ENCODE measurements at regions of chr16 and their contacts with region 1.

Region 1: GRCh38 chr16:69386596-69386995 is 789 bp upstream of the TERF2 start:
- DNase-seq: no peak
- ATAC-seq: no peak
- H3K4me3 ChIP-seq: no peak overlapping the region
- H3K4me3 Mint-ChIP-seq: peak overlapping the region in 8 of 10 donors; percentile 86 to 96 (median 92)
- H3K27ac ChIP-seq: peak overlapping the region; percentile 95
- H3K27ac Mint-ChIP-seq: peak overlapping the region in 6 of 9 donors; percentile 90 to 99 (median 95)
- H3K4me1 ChIP-seq: peaks cover 10 to 27% of the 10 kb centered on the region in 2 donors
- H3K4me1 Mint-ChIP-seq: peaks cover 22 to 37% (median 35%) of the 10 kb centered on the region in 7 donors
- H3K27me3 ChIP-seq: no peaks in the 10 kb centered on the region
- H3K27me3 Mint-ChIP-seq: no peaks in the 10 kb centered on the region

Region 2: GRCh38 chr16:67872786-67873537 is 1513.6 kb before region 1 on chr16 and contains the start of gene EDC4:
- CTCF ChIA-PET with region 1: no interaction called
- POLR2A ChIA-PET with region 1: no interaction called
- intact Hi-C with region 1: no loop called
- DNase-seq: peak; percentile 75 to 96 (median 83)
- ATAC-seq: peak; percentile 96
- H3K4me3 ChIP-seq: peak within 1 kb of the TSS; percentile 88
- H3K4me3 Mint-ChIP-seq: peak within 1 kb of the TSS; percentile 88 to 96 (median 94)
- H3K27ac ChIP-seq: peak within 1 kb of the TSS; percentile 91
- H3K27ac Mint-ChIP-seq: peak within 1 kb of the TSS; percentile 90 to 97 (median 92)
- H3K4me1 ChIP-seq: peaks cover 19 to 30% of the 10 kb centered on the region in 2 donors
- H3K4me1 Mint-ChIP-seq: peaks cover 25 to 41% (median 36%) of the 10 kb centered on the region in 7 donors
- H3K27me3 ChIP-seq: no peaks in the 10 kb centered on the region
- H3K27me3 Mint-ChIP-seq: no peaks in the 10 kb centered on the region
- total RNA-seq, gene EDC4: 103 to 166 (median 122) TPM

Region 3: DNA sequence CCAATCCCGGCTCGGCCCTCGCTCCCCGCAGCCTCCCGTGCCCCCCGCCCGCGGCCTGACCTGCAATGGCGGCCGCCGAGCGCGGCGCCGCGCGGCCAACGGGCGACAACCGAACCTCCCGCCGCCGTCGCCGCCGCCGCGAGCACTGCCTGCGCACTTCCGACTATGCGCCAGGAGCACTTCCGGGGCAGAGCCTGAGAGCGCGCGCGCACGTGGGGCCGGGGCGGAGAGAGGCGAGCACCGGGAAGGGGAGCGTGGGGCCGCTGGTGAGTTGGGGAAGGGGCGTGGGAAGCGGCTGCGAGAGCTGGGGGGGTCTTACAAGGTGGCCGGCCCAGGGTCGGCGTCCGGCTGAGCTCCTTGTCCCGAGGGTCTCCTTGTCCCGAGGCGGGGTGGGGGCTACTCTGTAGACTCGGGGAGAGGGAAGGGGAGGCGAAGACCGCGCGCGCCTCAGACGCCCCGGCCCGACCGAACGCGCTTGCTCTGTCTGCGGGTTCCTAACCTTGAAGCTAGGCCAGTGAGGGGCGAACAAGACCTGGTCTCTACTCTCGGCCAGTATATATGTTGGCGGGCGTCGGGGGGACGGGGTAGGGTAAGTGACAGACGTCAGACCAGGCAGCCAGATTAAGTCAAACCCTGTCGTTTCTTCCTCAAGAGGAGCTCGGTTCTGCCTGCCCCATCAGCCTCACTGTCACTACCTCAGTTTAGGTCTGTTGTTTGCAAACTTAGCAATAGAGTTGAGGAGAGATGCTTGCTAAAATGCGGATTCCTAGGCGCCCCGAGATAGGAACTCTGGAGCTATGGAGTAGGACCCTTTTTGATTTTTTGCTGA is 254.0 kb before region 1 on chr16 and contains the starts of genes CHTF8 and UTP4:
- CTCF ChIA-PET with region 1: no interaction called
- POLR2A ChIA-PET with region 1: interaction called, 3 read pairs
- intact Hi-C with region 1: loop called (anchors 2 to 5 kb)
- DNase-seq: peak; percentile 81 to 91 (median 87)
- ATAC-seq: peak; percentile 95
- H3K4me3 ChIP-seq: peak within 1 kb of the TSS; percentile 80
- H3K4me3 Mint-ChIP-seq: peak within 1 kb of the TSS; percentile 91 to 97 (median 94)
- H3K27ac ChIP-seq: peak within 1 kb of the TSS; percentile 88
- H3K27ac Mint-ChIP-seq: peak within 1 kb of the TSS; percentile 85 to 97 (median 95)
- H3K4me1 ChIP-seq: peaks cover 12 to 23% of the 10 kb centered on the region in 2 donors
- H3K4me1 Mint-ChIP-seq: peaks cover 16 to 71% (median 61%) of the 10 kb centered on the region in 7 donors
- H3K27me3 ChIP-seq: no peaks in the 10 kb centered on the region
- H3K27me3 Mint-ChIP-seq: no peaks in the 10 kb centered on the region
- total RNA-seq, gene CHTF8: 53.3 to 142 (median 133) TPM
- total RNA-seq, gene UTP4: 31.9 to 56.5 (median 35.1) TPM

Region 4: GRCh38 chr16:69273009-69273408 is 113.6 kb before region 1 on chr16:
- CTCF ChIA-PET with region 1: no interaction called
- POLR2A ChIA-PET with region 1: no interaction called
- intact Hi-C with region 1: no loop called
- DNase-seq: no peak
- ATAC-seq: no peak
- H3K4me3 ChIP-seq: no peak overlapping the region
- H3K4me3 Mint-ChIP-seq: no peak overlapping the region
- H3K27ac ChIP-seq: no peak overlapping the region
- H3K27ac Mint-ChIP-seq: no peak overlapping the region
- H3K4me1 ChIP-seq: no peaks in the 10 kb centered on the region
- H3K4me1 Mint-ChIP-seq: peaks cover 0 to 4% (median 0%) of the 10 kb centered on the region in 7 donors
- H3K27me3 ChIP-seq: no peaks in the 10 kb centered on the region
- H3K27me3 Mint-ChIP-seq: no peaks in the 10 kb centered on the region

Region 5: DNA sequence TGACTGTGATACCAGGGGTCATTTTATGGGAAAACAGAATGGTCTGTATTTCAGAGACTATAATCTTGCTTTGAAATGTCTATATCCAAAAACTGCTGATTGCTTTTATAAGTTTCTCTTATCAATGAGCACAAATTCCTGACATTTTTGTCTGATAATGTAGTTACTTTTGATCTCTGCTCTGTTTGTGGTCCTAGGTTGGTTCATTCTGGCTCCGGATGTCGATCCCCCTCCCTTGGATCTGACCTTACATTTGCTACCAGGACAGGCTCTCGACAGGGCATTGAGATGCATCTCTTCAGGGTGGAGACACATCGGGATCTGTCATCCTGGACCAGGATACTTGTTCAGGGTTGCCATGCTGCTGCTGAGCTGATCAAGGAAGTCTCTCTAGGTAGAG is 102.7 kb before region 1 on chr16:
- CTCF ChIA-PET with region 1: no interaction called
- POLR2A ChIA-PET with region 1: no interaction called
- intact Hi-C with region 1: no loop called
- DNase-seq: no peak
- ATAC-seq: no peak
- H3K4me3 ChIP-seq: no peak overlapping the region
- H3K4me3 Mint-ChIP-seq: no peak overlapping the region
- H3K27ac ChIP-seq: no peak overlapping the region
- H3K27ac Mint-ChIP-seq: no peak overlapping the region
- H3K4me1 ChIP-seq: no peaks in the 10 kb centered on the region
- H3K4me1 Mint-ChIP-seq: peaks cover 0 to 2% (median 0%) of the 10 kb centered on the region in 7 donors
- H3K27me3 ChIP-seq: no peaks in the 10 kb centered on the region
- H3K27me3 Mint-ChIP-seq: no peaks in the 10 kb centered on the region

Region 6: GRCh38 chr16:69330286-69331109 is 56.1 kb before region 1 on chr16 and contains the start of gene PDF:
- CTCF ChIA-PET with region 1: no interaction called
- POLR2A ChIA-PET with region 1: interaction called, 4 read pairs
- intact Hi-C with region 1: loop called in 1 of 2 experiments (anchors 2 kb)
- DNase-seq: peak; percentile 61 to 91 (median 72)
- ATAC-seq: peak; percentile 97
- H3K4me3 ChIP-seq: peak within 1 kb of the TSS; percentile 64
- H3K4me3 Mint-ChIP-seq: peak within 1 kb of the TSS; percentile 69 to 87 (median 76)
- H3K27ac ChIP-seq: peak within 1 kb of the TSS; percentile 90
- H3K27ac Mint-ChIP-seq: peak within 1 kb of the TSS; percentile 36 to 80 (median 62)
- H3K4me1 ChIP-seq: peaks cover 13 to 37% of the 10 kb centered on the region in 2 donors
- H3K4me1 Mint-ChIP-seq: peaks cover 16 to 72% (median 54%) of the 10 kb centered on the region in 7 donors
- H3K27me3 ChIP-seq: no peaks in the 10 kb centered on the region
- H3K27me3 Mint-ChIP-seq: no peaks in the 10 kb centered on the region
- total RNA-seq, gene PDF: 4.6 to 11.8 (median 9.5) TPM

Region 7: GRCh38 chr16:69424053-69424934 is 37.7 kb after region 1 on chr16 and contains the start of gene CYB5B:
- CTCF ChIA-PET with region 1: no interaction called
- POLR2A ChIA-PET with region 1: interaction called, 3 read pairs
- intact Hi-C with region 1: loop called (anchors 1 kb)
- DNase-seq: peak; percentile 72 to 98 (median 96)
- ATAC-seq: peak; percentile 98
- H3K4me3 ChIP-seq: peak within 1 kb of the TSS; percentile 84
- H3K4me3 Mint-ChIP-seq: peak within 1 kb of the TSS; percentile 92 to 99 (median 97)
- H3K27ac ChIP-seq: peak within 1 kb of the TSS; percentile 83
- H3K27ac Mint-ChIP-seq: peak within 1 kb of the TSS; percentile 89 to 98 (median 93)
- H3K4me1 ChIP-seq: peaks cover 0 to 13% of the 10 kb centered on the region in 2 donors
- H3K4me1 Mint-ChIP-seq: peaks cover 12 to 49% (median 37%) of the 10 kb centered on the region in 7 donors
- H3K27me3 ChIP-seq: no peaks in the 10 kb centered on the region
- H3K27me3 Mint-ChIP-seq: no peaks in the 10 kb centered on the region
- total RNA-seq, gene CYB5B: 29.6 to 148 (median 48.2) TPM

Region 8: DNA sequence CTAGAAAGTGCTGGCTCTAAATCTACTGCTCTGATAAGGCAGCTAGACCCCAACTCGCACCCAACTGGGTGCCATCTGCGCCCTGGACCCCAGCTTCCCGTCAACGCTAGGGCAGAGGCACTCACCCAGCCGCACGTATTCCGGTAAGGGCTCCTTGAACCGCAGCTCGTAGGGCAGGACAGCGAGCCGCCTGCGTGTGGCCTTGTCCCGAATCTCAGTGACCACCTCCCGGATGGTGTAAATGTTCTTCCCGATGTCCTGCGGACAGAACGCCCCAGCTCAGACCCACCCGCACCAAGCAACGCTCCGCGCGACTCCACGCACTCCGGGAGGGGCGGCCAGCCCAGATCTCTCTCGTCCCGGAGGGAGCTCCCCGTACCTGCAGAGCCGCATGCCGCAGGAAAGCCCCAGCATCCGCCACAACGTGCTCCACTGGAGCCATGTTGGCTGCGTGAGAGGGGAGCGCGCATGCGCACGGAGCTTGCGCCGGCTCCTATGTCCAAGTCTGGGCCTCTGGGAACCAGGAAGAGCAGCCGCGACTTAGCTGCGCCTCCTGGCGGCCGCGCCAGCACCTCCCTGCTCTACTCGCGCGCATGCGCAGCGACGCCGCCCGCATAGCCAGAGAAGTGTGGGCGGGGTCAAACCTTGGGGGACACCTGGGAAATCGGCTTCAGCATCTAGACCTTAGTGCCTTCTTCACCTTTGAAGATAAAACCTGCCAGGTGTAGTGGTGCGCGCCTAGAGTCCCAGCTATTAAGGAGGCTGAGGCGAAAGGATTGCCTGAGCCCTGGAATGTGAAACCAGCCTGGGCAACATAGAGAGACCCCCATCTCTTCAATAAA is 368.1 kb after region 1 on chr16 and contains the start of gene NOB1:
- CTCF ChIA-PET with region 1: no interaction called
- POLR2A ChIA-PET with region 1: no interaction called
- intact Hi-C with region 1: loop called (anchors 2 kb)
- DNase-seq: peak; percentile 96 to 98 (median 97)
- ATAC-seq: peak; percentile 97
- H3K4me3 ChIP-seq: peak within 1 kb of the TSS; percentile 91
- H3K4me3 Mint-ChIP-seq: peak within 1 kb of the TSS; percentile 98 to 100 (median 100)
- H3K27ac ChIP-seq: peak within 1 kb of the TSS; percentile 89
- H3K27ac Mint-ChIP-seq: peak within 1 kb of the TSS; percentile 92 to 100 (median 98)
- H3K4me1 ChIP-seq: peaks cover 13 to 17% of the 10 kb centered on the region in 2 donors
- H3K4me1 Mint-ChIP-seq: peaks cover 23 to 36% (median 26%) of the 10 kb centered on the region in 7 donors
- H3K27me3 ChIP-seq: no peaks in the 10 kb centered on the region
- H3K27me3 Mint-ChIP-seq: peaks cover 0 to 7% (median 0%) of the 10 kb centered on the region in 5 donors
- total RNA-seq, gene NOB1: 24.1 to 72.8 (median 45.0) TPM

Region 9: GRCh38 chr16:70438969-70439862 is 1052.6 kb after region 1 on chr16 and contains the start of gene ST3GAL2:
- CTCF ChIA-PET with region 1: no interaction called
- POLR2A ChIA-PET with region 1: no interaction called
- intact Hi-C with region 1: loop called in 1 of 2 experiments (anchors 5 kb)
- DNase-seq: peak; percentile 84 to 94 (median 90)
- ATAC-seq: peak; percentile 99
- H3K4me3 ChIP-seq: peak within 1 kb of the TSS; percentile 82
- H3K4me3 Mint-ChIP-seq: peak within 1 kb of the TSS; percentile 92 to 99 (median 98)
- H3K27ac ChIP-seq: peak within 1 kb of the TSS; percentile 58
- H3K27ac Mint-ChIP-seq: peak within 1 kb of the TSS; percentile 84 to 97 (median 93)
- H3K4me1 ChIP-seq: peaks cover 11 to 23% of the 10 kb centered on the region in 2 donors
- H3K4me1 Mint-ChIP-seq: peaks cover 18 to 46% (median 37%) of the 10 kb centered on the region in 7 donors
- H3K27me3 ChIP-seq: no peaks in the 10 kb centered on the region
- H3K27me3 Mint-ChIP-seq: no peaks in the 10 kb centered on the region
- total RNA-seq, gene ST3GAL2: 16.6 to 35.9 (median 30.4) TPM